Natural killer cell (primary cell): ENCODE measurements at regions of chr7 and their contacts with region 1.

Region 1: GRCh38 chr7:42931834-42932651 is at the starts of genes MRPL32 and PSMA2:
- DNase-seq: peak; percentile 89 to 98
- ATAC-seq: peak; percentile 98 to 100 (median 99)
- H3K4me3 ChIP-seq: peak within 1 kb of the TSS; percentile 88
- H3K4me3 Mint-ChIP-seq: peak within 1 kb of the TSS; percentile 100
- H3K27ac ChIP-seq: peak within 1 kb of the TSS; percentile 91
- H3K27ac Mint-ChIP-seq: peak within 1 kb of the TSS; percentile 98 to 99
- H3K4me1 ChIP-seq: peaks cover 16% of the 10 kb centered on the region
- H3K4me1 Mint-ChIP-seq: peaks cover 36 to 54% of the 10 kb centered on the region in 2 donors
- H3K27me3 ChIP-seq: no peaks in the 10 kb centered on the region
- H3K27me3 Mint-ChIP-seq: no peaks in the 10 kb centered on the region
- CTCF ChIP-seq: no peak
- total RNA-seq, gene MRPL32: 22.5 to 36.9 (median 32.6) TPM
- total RNA-seq, gene PSMA2: 46.5 to 55.6 (median 48.3) TPM

Region 2: DNA sequence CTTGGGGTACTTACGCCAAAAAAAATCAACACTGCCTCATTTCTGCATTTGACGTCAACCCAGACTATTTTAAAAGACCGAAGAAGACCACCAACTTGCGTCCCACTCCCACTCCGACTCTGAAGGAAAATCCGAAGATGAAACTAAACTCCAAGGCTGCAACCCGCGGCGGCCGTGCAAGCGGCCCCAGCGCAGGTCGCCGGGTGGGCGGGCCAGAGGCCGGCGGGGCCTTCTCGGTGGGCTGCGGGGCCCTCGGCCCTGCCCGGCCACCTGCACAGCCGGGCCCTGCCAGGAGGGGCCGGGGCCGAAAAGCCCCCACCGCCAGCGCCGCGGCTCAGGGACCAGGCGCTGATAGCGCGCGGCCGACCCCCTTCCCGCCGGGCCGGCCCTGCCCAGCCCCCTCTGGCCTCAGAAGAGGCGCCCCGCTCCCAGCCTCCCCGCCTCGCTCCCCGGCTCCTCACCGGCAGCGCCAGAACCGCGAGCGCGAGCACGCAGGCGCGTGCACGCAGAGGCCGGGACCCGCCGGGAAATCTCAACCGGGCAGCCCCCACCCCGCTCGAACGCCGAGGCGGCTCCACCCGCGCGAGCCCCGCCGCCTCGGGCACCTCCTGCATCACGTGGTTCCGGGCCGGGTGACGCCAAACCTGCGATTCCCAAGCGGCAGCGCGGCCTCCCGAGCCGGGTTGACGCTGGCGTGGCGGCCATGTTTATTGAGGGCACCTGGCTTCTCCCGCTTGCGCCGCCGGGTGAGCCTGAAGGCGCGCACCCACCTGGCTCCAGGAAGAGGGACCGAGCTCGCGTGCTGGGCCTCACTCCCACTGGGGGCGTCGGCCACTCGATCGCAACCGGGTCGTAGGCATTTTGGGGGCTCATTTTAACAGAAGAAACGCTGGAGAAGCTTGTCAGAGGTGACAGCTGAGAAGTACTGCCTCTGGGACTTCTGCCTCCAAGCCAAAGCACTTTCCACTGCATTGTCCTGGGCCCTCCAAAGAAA is 20.3 kb before region 1 on chr7 and contains the start of gene C7orf25:
- intact Hi-C with region 1: loop called (anchors 1 kb)
- DNase-seq: peak; percentile 93 to 97
- ATAC-seq: peak; percentile 83 to 96 (median 94)
- H3K4me3 ChIP-seq: peak within 1 kb of the TSS; percentile 55
- H3K4me3 Mint-ChIP-seq: peak within 1 kb of the TSS; percentile 97
- H3K27ac ChIP-seq: peak within 1 kb of the TSS; percentile 48
- H3K27ac Mint-ChIP-seq: peak within 1 kb of the TSS; percentile 88 to 95
- H3K4me1 ChIP-seq: peaks cover 9% of the 10 kb centered on the region
- H3K4me1 Mint-ChIP-seq: peaks cover 56 to 58% of the 10 kb centered on the region in 2 donors
- H3K27me3 ChIP-seq: no peaks in the 10 kb centered on the region
- H3K27me3 Mint-ChIP-seq: no peaks in the 10 kb centered on the region
- CTCF ChIP-seq: no peak
- total RNA-seq, gene C7orf25: 3.9 to 5.2 (median 5.1) TPM